ENCODE measurements at regions of chr10 and their contacts with region 1.

Region 1: DNA sequence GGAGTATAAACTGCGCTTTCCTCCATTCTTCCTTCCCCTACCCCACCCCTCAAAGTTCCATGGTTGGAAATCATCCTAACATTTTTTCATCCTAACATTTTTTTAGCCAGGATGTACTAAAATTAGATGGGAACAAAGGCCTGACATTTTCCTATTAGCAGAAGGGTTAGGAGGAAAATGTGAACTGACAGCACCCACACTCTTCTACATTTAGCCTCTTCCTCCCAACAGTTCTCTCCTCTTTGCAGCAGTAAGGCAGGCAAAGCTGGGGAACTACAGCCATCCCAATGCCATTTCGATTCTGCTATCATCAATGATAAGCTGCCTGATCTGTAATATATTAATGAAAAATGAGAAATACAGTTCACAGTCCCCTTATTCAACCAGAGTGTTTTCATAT is 11.4 kb upstream of the FAM53B start:
- DNase-seq: no peak
- H3K4me3 ChIP-seq: no peak overlapping the region
- H3K27ac ChIP-seq: peak overlapping the region in 1 of 2 experiments; percentile 29; a peak in 1 of 4 replicates
- H3K4me1 ChIP-seq: peaks cover 0 to 7% of the 10 kb centered on the region in 2 experiments; a peak in 1 of 4 replicates
- H3K27me3 ChIP-seq: no peaks in the 10 kb centered on the region
- CTCF ChIP-seq: no peak
- EP300 ChIP-seq: no peak
- RAD21 ChIP-seq: no peak

Region 2: GRCh38 chr10:124530215-124530665 is 225.3 kb before region 1 on chr10:
- CTCF ChIA-PET with region 1: interaction called, 10 read pairs
- POLR2A ChIA-PET with region 1: no interaction called
- DNase-seq: peak; percentile 98
- H3K4me3 ChIP-seq: no peak overlapping the region; a peak in 1 of 4 replicates
- H3K27ac ChIP-seq: no peak overlapping the region
- H3K4me1 ChIP-seq: peaks cover 0 to 15% of the 10 kb centered on the region in 2 experiments; a peak in 1 of 4 replicates
- H3K27me3 ChIP-seq: no peaks in the 10 kb centered on the region
- CTCF ChIP-seq: peak; percentile 83
- EP300 ChIP-seq: no peak
- RAD21 ChIP-seq: peak; percentile 92

Region 3: DNA sequence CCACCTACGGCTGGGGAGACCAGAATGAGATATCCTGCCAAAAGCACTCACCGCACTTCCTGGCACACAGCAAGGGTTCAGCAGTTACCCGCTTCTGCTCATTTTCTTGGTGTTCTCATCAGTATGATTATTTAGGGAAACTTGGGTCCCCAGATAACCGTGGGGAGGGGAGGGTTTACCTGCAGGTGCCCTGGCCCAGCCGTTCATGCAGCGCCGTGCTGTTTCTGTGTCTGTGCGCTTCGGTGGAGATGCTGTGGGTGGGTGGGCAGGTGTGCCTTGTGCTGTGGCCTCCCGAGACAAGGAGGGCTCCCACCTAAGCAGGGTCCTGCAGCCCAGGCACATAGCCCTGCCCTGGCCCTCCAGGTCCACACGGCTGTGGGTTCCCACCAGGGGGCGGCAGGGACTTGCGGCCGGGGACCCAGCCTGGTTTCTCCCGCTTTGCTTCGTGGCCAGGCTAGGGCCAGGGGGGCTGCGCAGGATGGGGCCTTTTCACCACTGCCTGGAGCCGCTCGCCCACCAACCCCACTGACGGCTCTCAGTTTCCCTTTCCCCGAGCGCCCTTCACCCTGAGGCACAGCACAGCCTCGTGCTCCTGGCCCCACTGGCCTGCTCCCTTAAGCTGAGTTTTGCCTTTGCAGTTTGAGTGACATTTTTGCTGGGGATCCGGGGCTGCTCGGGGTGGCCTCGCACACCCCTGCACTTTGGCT is 215.5 kb before region 1 on chr10:
- CTCF ChIA-PET with region 1: interaction called, 14 read pairs
- POLR2A ChIA-PET with region 1: no interaction called
- DNase-seq: peak; percentile 96
- H3K4me3 ChIP-seq: no peak overlapping the region
- H3K27ac ChIP-seq: no peak overlapping the region
- H3K4me1 ChIP-seq: peaks cover 0 to 6% of the 10 kb centered on the region in 2 experiments; a peak in 1 of 4 replicates
- H3K27me3 ChIP-seq: no peaks in the 10 kb centered on the region
- CTCF ChIP-seq: peak; percentile 58
- EP300 ChIP-seq: no peak
- RAD21 ChIP-seq: peak; percentile 90

Region 4: DNA sequence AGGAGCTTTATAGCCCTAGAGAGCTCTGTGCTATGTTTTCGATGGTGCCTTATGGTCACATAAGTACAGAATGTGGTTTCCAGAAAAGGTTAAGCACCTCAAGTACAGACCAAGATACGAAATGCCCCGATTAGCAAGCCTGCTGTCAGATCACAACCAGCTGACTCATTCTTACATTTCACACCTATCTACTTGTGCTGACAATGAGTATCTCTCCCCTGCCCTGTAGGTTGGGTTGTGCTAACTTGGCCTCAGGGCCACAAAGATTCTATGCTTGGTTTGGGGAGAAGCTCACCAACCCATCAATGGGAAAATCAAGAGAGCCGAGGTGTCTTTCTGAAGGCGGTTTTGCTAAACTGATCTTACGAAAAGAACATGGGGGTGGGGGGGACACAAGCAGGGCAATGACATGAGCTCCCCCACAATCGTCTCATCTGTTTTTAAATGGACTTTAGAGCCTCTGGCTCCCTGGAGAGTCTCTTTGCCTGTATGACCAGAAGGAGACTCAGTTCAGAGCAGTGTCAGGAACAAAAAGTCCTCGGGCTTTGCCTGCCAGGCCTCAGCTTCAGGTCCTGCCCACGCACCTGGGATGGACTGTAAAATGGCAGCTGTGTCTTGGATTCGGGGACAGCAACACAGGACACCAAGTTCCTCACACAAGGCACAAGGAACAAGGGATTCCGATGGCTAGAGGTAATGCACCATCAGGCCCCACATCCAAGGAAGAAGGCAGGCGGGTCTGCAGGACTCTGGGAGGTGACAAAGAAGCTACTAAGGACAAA is 66.5 kb before region 1 on chr10:
- CTCF ChIA-PET with region 1: no interaction called
- POLR2A ChIA-PET with region 1: no interaction called
- DNase-seq: no peak
- H3K4me3 ChIP-seq: no peak overlapping the region
- H3K27ac ChIP-seq: no peak overlapping the region
- H3K4me1 ChIP-seq: peaks cover 0 to 4% of the 10 kb centered on the region in 2 experiments; a peak in 1 of 4 replicates
- H3K27me3 ChIP-seq: no peaks in the 10 kb centered on the region
- CTCF ChIP-seq: no peak
- EP300 ChIP-seq: no peak
- RAD21 ChIP-seq: no peak

Measured in SK-N-SH (cell line).